Sigmoid colon (tissue), 7 donors: ENCODE measurements at regions of chr12 and their contacts with region 1.

Region 1: GRCh38 chr12:6341417-6342139 is at the start of gene TNFRSF1A:
- DNase-seq: peak; percentile 93
- H3K4me3 ChIP-seq: peak within 1 kb of the TSS; percentile 80 to 88 (median 87)
- H3K27ac ChIP-seq: peak within 1 kb of the TSS; percentile 93 to 98 (median 97)
- H3K4me1 ChIP-seq: peaks cover 0 to 71% (median 57%) of the 10 kb centered on the region in 4 donors
- H3K27me3 ChIP-seq: no peaks in the 10 kb centered on the region
- CTCF ChIP-seq: no peak
- EP300 ChIP-seq: no peak
- POLR2A ChIP-seq: peak; percentile 78 to 87
- total RNA-seq, gene TNFRSF1A: 135 to 191 (median 176) TPM

Region 2: GRCh38 chr12:6361834-6362782 is 20.5 kb after region 1 on chr12:
- intact Hi-C with region 1: loop called (anchors 2 kb)
- DNase-seq: no peak
- H3K4me3 ChIP-seq: no peak overlapping the region
- H3K27ac ChIP-seq: peak overlapping the region; percentile 39 to 98 (median 94)
- H3K4me1 ChIP-seq: peaks cover 0 to 27% (median 16%) of the 10 kb centered on the region in 4 donors
- H3K27me3 ChIP-seq: no peaks in the 10 kb centered on the region
- CTCF ChIP-seq: no peak
- EP300 ChIP-seq: no peak
- POLR2A ChIP-seq: no peak

Region 3: GRCh38 chr12:6376079-6376869 is 34.7 kb after region 1 on chr12:
- intact Hi-C with region 1: no loop called
- DNase-seq: peak; percentile 85
- H3K4me3 ChIP-seq: no peak overlapping the region
- H3K27ac ChIP-seq: peak overlapping the region; percentile 75 to 80 (median 78)
- H3K4me1 ChIP-seq: peaks cover 0 to 82% (median 69%) of the 10 kb centered on the region in 4 donors
- H3K27me3 ChIP-seq: no peaks in the 10 kb centered on the region
- CTCF ChIP-seq: peak; percentile 10 to 52 (median 40)
- EP300 ChIP-seq: no peak
- POLR2A ChIP-seq: no peak

Region 4: DNA sequence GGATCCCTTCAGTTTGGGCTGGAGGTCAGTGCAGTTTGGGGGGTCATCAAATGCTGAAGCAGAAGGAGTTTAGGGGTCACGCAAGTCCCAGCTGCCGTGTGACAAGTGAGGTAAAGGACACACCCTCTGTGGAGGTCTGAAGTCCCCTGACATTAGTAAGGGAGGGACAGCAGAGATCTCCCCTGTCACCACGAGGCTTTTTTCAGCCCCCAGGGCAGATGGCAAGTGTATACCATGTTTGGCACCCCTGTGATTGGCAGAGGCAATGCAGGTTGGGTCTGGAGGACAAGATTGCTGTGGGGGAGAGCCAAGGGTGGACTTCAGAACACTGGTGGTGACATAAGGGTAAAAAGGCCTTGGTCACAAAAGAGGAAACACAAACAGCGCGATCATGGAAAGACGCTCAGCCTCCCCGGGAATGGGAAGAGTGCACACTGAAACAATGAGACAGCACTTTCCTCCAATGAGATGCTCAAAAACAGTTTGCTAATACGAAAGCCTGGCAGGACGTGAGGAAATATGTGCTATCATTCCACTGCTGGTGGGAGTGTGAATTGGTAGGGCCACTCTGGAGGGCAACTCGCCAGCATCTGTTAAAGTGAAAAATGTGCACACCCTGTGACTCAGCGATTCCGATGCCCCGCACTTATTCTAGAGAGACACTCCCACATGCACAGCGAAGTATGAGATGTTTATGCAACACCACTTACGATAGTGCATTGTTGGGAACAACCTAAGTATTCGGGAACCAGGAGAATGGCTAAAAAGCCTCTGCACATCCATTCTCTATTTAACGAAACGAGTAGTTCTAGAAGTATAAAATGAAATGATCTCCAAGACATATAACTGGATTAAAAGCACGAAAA is 88.8 kb after region 1 on chr12:
- intact Hi-C with region 1: loop called (anchors 2 kb)
- DNase-seq: peak; percentile 96
- H3K4me3 ChIP-seq: peak overlapping the region in 3 of 4 donors; percentile 31 to 43 (median 41)
- H3K27ac ChIP-seq: peak overlapping the region; percentile 83 to 90 (median 86)
- H3K4me1 ChIP-seq: peaks cover 0 to 19% (median 14%) of the 10 kb centered on the region in 4 donors
- H3K27me3 ChIP-seq: no peaks in the 10 kb centered on the region
- CTCF ChIP-seq: no peak
- EP300 ChIP-seq: peak in 1 of 4 donors; percentile 58
- POLR2A ChIP-seq: no peak